MCF 10A (cell line): ENCODE measurements at regions of chr19 and their contacts with region 1.

Region 1: DNA sequence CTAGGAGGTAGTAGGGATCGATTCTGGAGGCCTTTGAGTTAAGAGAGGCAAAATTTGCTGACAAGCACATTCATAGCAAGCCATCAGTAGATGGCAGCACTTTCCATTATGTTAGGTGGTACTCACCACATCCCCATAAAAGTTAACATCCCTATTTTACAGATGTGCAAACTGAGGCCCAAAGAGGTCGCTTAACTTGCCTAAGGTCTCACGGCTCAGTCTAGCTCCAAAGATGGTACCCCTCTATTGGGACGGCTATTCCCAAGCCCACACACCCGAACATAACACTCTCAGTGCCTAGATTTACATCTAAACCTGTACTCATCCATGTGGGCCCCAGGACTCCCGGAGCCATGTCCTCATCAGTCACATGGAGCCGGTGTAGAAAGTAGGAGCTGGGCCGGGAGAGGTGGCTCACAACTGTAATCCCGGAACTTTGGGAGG is 21.5 kb upstream of the FOSB start:
- DNase-seq: peak; percentile 60
- H3K4me3 Mint-ChIP-seq: no peak overlapping the region
- H3K27ac Mint-ChIP-seq: peak overlapping the region; percentile 100
- H3K4me1 Mint-ChIP-seq: peaks cover 52% of the 10 kb centered on the region
- H3K27me3 Mint-ChIP-seq: no peaks in the 10 kb centered on the region
- CTCF ChIP-seq: peak; percentile 31

Region 2: GRCh38 chr19:45478454-45479238 is 32.3 kb after region 1 on chr19:
- CTCF ChIA-PET with region 1: interaction called, 386 read pairs
- POLR2A ChIA-PET with region 1: interaction called, 110 read pairs
- intact Hi-C with region 1: loop called (anchors 1 kb)
- DNase-seq: peak; percentile 95
- H3K4me3 Mint-ChIP-seq: peak overlapping the region; percentile 76
- H3K27ac Mint-ChIP-seq: peak overlapping the region; percentile 99
- H3K4me1 Mint-ChIP-seq: peaks cover 14% of the 10 kb centered on the region
- H3K27me3 Mint-ChIP-seq: no peaks in the 10 kb centered on the region
- CTCF ChIP-seq: peak; percentile 97